Right cardiac atrium (tissue), 5 donors: ENCODE measurements at regions of chr4 and their contacts with region 1.

Region 1: GRCh38 chr4:12633053-12633651 is 851.0 kb downstream of the RAB28 start:
- DNase-seq: peak; percentile 73 to 89 (median 84)
- ATAC-seq: peak; percentile 74 to 89
- H3K4me3 ChIP-seq: no peak overlapping the region
- H3K27ac ChIP-seq: no peak overlapping the region
- H3K4me1 ChIP-seq: no peaks in the 10 kb centered on the region
- H3K27me3 ChIP-seq: no peaks in the 10 kb centered on the region

Region 2: DNA sequence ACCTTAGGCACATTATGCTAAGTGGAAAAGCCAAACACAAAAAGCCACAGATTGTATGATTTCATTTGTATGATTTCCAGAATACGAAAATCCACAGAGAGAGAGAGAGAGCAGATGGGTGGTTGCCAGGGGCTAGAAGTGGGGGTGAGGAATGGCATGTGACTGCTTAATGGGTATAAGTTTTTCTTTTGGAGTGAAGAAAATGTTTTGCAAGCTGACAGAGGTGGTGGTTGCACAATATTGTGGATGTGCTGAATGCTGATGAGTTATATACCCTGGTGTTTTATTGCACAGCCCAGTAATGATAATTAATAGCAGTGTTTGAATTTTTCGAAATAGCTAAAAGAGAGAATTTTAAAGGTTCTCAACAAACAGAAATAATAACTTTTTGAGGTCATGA is 818.4 kb before region 1 on chr4:
- intact Hi-C with region 1: loop called in 1 of 4 experiments (anchors 10 kb)
- DNase-seq: no peak
- ATAC-seq: no peak
- H3K4me3 ChIP-seq: no peak overlapping the region
- H3K27ac ChIP-seq: no peak overlapping the region
- H3K4me1 ChIP-seq: no peaks in the 10 kb centered on the region
- H3K27me3 ChIP-seq: no peaks in the 10 kb centered on the region

Region 3: GRCh38 chr4:12041828-12042227 is 591.3 kb before region 1 on chr4:
- intact Hi-C with region 1: loop called in 2 of 4 experiments (anchors 5 to 10 kb)
- DNase-seq: no peak
- ATAC-seq: peak in 1 of 2 donors; percentile 47
- H3K4me3 ChIP-seq: no peak overlapping the region
- H3K27ac ChIP-seq: no peak overlapping the region
- H3K4me1 ChIP-seq: no peaks in the 10 kb centered on the region
- H3K27me3 ChIP-seq: no peaks in the 10 kb centered on the region